Dendritic cell treated with granulocyte-macrophage colony-stimulating factor and Interleukin-4, amounts not matched to agents 40 ng/mL and 50 ng/mL, for 4 days (primary cell): ENCODE measurements at regions of chr10 and their contacts with region 1.

Region 1: DNA sequence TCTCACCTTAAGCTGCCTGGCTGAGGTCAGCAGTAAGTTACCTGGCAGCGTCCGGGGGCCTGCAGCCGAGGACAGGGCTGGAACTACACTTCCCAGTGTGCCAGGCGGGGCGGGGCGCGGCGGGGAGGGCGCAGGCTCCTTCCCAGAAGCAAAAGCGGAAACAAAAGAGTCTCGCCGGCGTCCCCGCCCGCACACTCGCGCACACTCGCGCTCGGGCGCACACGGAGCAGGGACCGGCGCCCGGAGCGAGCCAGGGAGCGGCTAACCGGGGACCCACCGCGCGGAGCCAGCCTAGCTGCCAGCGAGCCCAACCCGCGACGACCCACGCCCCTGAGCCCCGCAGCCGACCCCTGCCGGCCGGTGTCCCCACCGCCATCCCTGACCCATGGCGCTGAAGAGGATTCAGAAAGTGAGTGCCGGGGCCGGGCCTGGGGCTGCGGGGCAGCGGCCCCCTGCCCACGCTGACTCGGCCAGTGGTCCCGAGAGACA is at the start of gene UBE2D1:
- H3K4me3 Mint-ChIP-seq: peak within 1 kb of the TSS; percentile 83
- H3K27ac Mint-ChIP-seq: peak within 1 kb of the TSS; percentile 80
- H3K4me1 Mint-ChIP-seq: peaks cover 61% of the 10 kb centered on the region
- H3K27me3 Mint-ChIP-seq: no peaks in the 10 kb centered on the region

Region 2: DNA sequence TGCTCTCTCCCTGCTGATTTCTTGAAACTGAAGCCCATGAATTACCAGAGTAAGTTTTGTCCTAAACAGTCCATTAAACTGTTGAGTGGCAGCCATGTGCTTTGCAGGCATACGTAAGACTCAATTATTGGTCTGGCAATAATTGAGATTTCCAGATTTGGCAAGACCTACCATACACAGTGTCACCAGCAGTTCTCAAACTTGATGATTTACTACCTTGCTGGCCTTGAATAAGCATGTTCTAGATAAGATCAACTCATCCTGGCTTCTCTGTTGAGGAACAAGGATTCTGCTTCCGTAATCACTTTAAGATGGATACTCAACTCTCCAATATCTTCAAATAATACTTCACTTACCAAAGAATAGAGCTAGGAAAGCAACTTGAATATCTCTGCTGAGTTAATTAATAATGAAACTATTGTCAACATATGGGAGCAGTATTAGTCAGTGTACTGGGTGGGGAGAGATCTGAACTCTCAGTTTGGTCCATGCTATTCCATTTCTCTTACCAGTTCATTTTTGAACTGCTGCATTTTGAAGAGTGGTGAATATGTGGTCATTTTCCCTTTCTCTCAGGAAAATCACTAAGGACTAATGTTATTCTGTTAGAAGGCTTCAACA is 248.6 kb before region 1 on chr10:
- intact Hi-C with region 1: no loop called
- H3K4me3 Mint-ChIP-seq: no peak overlapping the region
- H3K27ac Mint-ChIP-seq: no peak overlapping the region
- H3K4me1 Mint-ChIP-seq: no peaks in the 10 kb centered on the region
- H3K27me3 Mint-ChIP-seq: no peaks in the 10 kb centered on the region

Region 3: GRCh38 chr10:58104351-58104751 is 230.5 kb before region 1 on chr10:
- intact Hi-C with region 1: no loop called
- H3K4me3 Mint-ChIP-seq: no peak overlapping the region
- H3K27ac Mint-ChIP-seq: no peak overlapping the region
- H3K4me1 Mint-ChIP-seq: no peaks in the 10 kb centered on the region
- H3K27me3 Mint-ChIP-seq: no peaks in the 10 kb centered on the region

Region 4: GRCh38 chr10:58268870-58269605 is 65.8 kb before region 1 on chr10 and contains the start of gene CISD1:
- intact Hi-C with region 1: loop called (anchors 10 kb)
- H3K4me3 Mint-ChIP-seq: peak within 1 kb of the TSS; percentile 97
- H3K27ac Mint-ChIP-seq: peak within 1 kb of the TSS; percentile 98
- H3K4me1 Mint-ChIP-seq: peaks cover 3% of the 10 kb centered on the region
- H3K27me3 Mint-ChIP-seq: no peaks in the 10 kb centered on the region

Region 5: GRCh38 chr10:58299580-58299979 is 35.3 kb before region 1 on chr10:
- intact Hi-C with region 1: no loop called
- H3K4me3 Mint-ChIP-seq: no peak overlapping the region
- H3K27ac Mint-ChIP-seq: no peak overlapping the region
- H3K4me1 Mint-ChIP-seq: no peaks in the 10 kb centered on the region
- H3K27me3 Mint-ChIP-seq: peaks cover 14% of the 10 kb centered on the region